Gastrocnemius medialis (tissue), 4 donors: ENCODE measurements at regions of chr11 and their contacts with region 1.

Region 1: GRCh38 chr11:62315431-62315830 is 16.6 kb upstream of the SCGB1D4 start:
- DNase-seq: no peak
- ATAC-seq: no peak
- H3K4me3 ChIP-seq: no peak overlapping the region
- H3K27ac ChIP-seq: no peak overlapping the region
- H3K4me1 ChIP-seq: no peaks in the 10 kb centered on the region
- H3K27me3 ChIP-seq: no peaks in the 10 kb centered on the region
- CTCF ChIP-seq: no peak
- POLR2A ChIP-seq: no peak

Region 2: DNA sequence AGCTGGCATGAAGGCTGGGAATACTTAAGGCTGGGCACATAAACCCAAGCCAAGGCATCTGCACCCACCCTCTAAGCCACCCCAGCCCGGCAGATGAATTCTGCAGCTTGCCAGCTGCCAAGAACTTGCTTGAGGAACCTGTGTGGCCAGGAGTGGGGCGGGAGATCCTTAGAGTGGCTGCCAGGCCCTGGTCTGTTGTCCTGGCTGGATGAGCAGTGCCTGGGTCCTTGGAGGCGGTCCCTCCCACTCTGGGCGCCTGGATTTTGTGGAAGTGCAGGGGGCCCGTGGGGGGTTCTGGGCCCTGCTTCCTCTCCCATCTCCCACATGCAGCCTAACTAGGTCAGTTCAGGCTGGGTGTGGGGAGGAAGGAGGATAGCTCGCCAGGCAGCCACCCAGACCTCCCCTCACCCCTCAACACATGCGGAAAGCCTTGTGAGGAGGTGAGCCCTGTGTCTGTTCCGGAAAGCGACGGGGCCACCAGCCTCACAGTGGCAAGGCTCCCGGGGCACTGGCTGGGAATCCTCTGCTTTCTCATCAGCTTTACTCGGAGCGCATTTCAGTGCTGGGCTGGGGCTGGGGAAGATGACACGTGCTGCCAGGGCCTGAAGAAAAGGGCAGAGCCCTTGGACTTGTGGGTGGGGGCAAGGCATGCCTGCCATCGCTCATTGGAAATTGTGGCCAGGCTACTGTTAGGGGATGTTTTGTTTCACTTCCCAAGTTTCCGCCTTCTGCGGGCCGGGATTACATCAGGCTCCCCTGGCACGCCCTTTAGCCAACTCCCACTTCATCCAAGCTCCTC is 626.9 kb before region 1 on chr11:
- in situ Hi-C with region 1: no loop called
- intact Hi-C with region 1: no loop called
- DNase-seq: peak; percentile 56 to 77
- ATAC-seq: peak; percentile 71 to 84
- H3K4me3 ChIP-seq: peak overlapping the region; percentile 26 to 36 (median 30)
- H3K27ac ChIP-seq: peak overlapping the region; percentile 69 to 80 (median 79)
- H3K4me1 ChIP-seq: peaks cover 6 to 19% of the 10 kb centered on the region in 2 donors
- H3K27me3 ChIP-seq: no peaks in the 10 kb centered on the region
- CTCF ChIP-seq: no peak
- POLR2A ChIP-seq: peak in 1 of 2 donors; percentile 9

Region 3: GRCh38 chr11:62169091-62169847 is 146.2 kb before region 1 on chr11:
- in situ Hi-C with region 1: loop called in 1 of 4 experiments (anchors 10 kb)
- intact Hi-C with region 1: loop called (anchors 1 kb)
- DNase-seq: peak in 1 of 2 donors; percentile 50
- ATAC-seq: peak; percentile 19 to 47
- H3K4me3 ChIP-seq: no peak overlapping the region
- H3K27ac ChIP-seq: peak overlapping the region; percentile 1 to 44 (median 32)
- H3K4me1 ChIP-seq: peaks cover 12 to 15% of the 10 kb centered on the region in 2 donors
- H3K27me3 ChIP-seq: no peaks in the 10 kb centered on the region
- CTCF ChIP-seq: no peak
- POLR2A ChIP-seq: no peak